Tibial artery (tissue), 4 donors: ENCODE measurements at regions of chr12 and their contacts with region 1.

Region 1: DNA sequence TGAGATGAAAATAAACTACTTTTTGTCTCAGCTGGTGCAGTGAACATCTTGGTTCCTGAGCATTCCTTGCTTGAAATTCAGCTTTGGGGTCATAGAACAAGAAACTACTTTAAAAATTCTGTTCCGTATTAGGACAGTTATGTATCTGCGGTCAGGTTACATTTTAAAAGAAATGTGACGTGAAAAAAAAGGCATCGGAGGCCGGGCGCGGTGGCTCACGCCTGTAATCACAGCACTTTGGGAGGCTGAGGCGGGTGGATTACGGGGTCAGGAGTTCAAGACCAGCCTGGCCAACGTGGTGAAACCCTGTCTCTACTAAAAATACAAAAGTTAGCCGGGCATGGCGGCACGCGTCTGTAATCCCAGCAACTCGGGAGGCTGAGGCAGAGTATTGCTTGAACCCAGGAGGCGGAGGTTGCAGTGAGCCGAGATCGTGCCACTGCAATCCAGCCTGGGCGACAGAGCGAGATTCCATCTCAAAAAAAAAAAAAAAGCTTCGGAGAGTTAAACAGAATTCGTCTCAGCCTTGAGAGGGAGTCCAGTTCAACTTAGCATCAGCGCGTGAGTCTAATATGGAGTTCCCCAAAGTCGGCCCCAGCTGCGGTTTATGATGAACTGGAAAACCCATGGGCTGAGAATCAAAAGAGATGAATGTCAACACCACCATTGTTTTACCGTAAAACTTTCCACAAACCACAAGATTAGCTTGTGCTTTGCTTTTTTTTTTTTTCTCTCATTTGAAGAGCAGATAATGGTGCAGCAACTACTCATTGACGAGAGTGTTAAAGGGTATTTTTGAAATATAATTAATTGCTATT is 2.1 kb upstream of the SLC2A13 start:
- DNase-seq: no peak
- H3K4me3 ChIP-seq: peak overlapping the region in 1 of 2 donors; percentile 99
- H3K27ac ChIP-seq: no peak overlapping the region
- H3K4me1 ChIP-seq: peaks cover 0 to 20% (median 5%) of the 10 kb centered on the region in 4 donors
- H3K27me3 ChIP-seq: peaks cover 0 to 5% of the 10 kb centered on the region in 2 donors
- CTCF ChIP-seq: peak in 1 of 2 experiments; percentile 8

Region 2: DNA sequence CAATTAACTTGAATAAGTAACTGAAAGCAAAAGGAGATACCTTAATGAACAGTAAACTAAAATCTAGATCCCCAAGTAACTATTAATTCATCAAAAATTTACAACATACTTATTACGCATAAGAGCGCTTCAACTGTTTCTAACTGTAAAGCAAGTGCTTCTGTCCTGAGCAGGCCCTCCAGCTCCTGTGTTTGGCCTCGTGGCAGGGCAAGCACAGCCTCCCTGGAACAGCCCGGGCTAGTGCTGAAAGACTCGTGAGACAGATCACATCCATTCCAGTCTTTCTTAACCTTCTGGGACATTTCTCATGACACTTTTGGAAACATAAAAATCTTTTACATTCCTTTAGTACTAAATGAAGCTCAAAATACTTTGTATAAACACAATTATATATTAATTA is 309.6 kb before region 1 on chr12:
- intact Hi-C with region 1: no loop called
- DNase-seq: no peak
- H3K4me3 ChIP-seq: no peak overlapping the region
- H3K27ac ChIP-seq: no peak overlapping the region
- H3K4me1 ChIP-seq: no peaks in the 10 kb centered on the region
- H3K27me3 ChIP-seq: no peaks in the 10 kb centered on the region
- CTCF ChIP-seq: no peak

Region 3: DNA sequence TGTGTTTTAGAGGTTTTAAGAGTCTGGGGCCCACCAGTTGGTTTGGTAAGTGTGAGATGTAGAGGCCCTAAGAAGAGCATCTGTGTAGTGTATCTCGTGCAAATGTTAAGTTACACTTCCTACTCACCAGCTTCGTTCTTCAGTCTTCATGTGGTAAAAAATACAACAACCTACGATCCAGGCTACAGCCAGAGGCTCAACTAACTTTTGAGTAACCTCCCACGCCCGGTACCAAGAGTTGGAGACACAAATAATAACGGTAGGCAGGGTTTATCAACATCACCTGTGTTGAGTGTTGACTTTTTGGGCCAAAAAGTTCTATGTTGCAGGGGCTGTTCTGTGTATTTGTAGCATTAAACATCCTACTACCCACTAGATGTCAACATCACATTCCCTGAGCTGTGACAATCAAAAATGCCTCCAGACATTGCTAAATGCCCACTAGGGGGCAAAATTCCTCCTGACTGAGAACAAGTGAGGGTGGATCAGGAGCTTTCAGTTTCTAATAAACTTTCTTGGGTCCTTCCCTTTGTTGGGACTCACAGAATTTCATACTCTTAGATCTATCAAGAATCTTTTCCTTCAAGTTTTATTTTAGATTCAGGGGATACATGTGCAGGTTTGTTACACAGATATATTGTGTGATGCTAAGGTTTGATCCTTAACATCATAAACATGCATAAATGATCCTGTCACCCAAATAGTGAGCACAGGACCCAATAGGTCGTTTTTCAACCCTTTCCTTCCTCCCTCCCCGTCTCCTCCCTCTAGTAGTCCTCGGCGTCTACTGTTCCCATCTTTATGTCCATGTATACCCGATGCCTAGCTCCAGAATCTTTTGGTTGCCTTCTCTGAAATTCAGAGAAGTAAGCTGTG is 96.9 kb before region 1 on chr12:
- intact Hi-C with region 1: loop called (anchors 2 kb)
- DNase-seq: peak in 1 of 2 donors; percentile 66
- H3K4me3 ChIP-seq: peak overlapping the region; percentile 30 to 41
- H3K27ac ChIP-seq: peak overlapping the region; percentile 34 to 57
- H3K4me1 ChIP-seq: peaks cover 0 to 4% (median 0%) of the 10 kb centered on the region in 4 donors
- H3K27me3 ChIP-seq: no peaks in the 10 kb centered on the region
- CTCF ChIP-seq: peak; percentile 80 to 82